MCF 10A (cell line): ENCODE measurements at regions of chr1 and their contacts with region 1.

Region 1: DNA sequence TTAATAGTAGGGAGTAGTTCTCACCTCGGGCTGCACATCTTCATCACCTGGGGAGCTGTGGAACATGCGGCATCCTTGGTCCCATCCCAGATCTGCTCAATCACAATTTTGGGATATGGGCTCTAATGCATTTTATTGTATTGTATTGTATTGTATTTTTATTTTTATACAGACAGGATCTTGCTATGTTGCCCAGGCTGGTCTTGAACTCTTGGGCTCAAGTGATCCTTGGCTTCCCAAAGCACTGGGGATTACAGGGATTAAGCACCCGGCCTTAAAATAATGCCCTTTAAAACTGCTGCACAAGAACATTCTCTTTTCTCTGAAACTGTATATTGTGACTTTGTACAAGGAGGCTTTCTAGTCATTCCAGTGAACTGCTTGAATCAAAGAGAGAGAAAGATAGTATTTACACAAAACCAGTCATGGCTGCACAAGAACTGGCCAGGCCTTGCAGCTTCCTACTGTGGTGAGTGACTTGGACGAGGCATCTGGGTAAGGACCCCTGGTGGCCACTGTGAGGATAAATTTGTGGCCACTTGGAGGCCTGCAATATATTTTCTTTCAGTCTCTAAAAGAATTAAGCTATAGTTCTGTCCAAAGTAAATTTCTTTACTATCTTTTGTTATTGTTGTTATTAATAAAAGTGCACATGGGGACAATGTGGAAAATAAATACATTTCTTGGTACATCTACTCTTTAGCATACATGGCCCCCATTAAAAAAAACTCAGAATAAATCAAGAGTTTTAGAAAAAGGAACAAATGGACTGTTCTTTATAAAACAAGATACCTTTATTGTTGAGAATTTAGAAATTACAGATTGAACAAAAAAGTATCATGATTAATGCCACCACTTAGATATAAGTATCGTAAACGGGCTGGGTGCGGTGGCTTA is 48.0 kb downstream of the TBCE start:
- DNase-seq: peak; percentile 88
- H3K4me3 Mint-ChIP-seq: no peak overlapping the region
- H3K27ac Mint-ChIP-seq: no peak overlapping the region
- H3K4me1 Mint-ChIP-seq: peaks cover 18% of the 10 kb centered on the region
- H3K27me3 Mint-ChIP-seq: no peaks in the 10 kb centered on the region
- CTCF ChIP-seq: peak; percentile 86

Region 2: GRCh38 chr1:235105051-235106043 is 309.9 kb before region 1 on chr1:
- CTCF ChIA-PET with region 1: interaction called, 13 read pairs
- POLR2A ChIA-PET with region 1: no interaction called
- intact Hi-C with region 1: loop called (anchors 1 kb)
- DNase-seq: peak; percentile 51
- H3K4me3 Mint-ChIP-seq: peak overlapping the region; percentile 59
- H3K27ac Mint-ChIP-seq: peak overlapping the region; percentile 33
- H3K4me1 Mint-ChIP-seq: peaks cover 29% of the 10 kb centered on the region
- H3K27me3 Mint-ChIP-seq: no peaks in the 10 kb centered on the region
- CTCF ChIP-seq: no peak

Region 3: GRCh38 chr1:235225299-235225698 is 190.0 kb before region 1 on chr1:
- CTCF ChIA-PET with region 1: interaction called, 20 read pairs
- POLR2A ChIA-PET with region 1: no interaction called
- intact Hi-C with region 1: no loop called
- DNase-seq: no peak
- H3K4me3 Mint-ChIP-seq: no peak overlapping the region
- H3K27ac Mint-ChIP-seq: no peak overlapping the region
- H3K4me1 Mint-ChIP-seq: peaks cover 3% of the 10 kb centered on the region
- H3K27me3 Mint-ChIP-seq: no peaks in the 10 kb centered on the region
- CTCF ChIP-seq: no peak

Region 4: DNA sequence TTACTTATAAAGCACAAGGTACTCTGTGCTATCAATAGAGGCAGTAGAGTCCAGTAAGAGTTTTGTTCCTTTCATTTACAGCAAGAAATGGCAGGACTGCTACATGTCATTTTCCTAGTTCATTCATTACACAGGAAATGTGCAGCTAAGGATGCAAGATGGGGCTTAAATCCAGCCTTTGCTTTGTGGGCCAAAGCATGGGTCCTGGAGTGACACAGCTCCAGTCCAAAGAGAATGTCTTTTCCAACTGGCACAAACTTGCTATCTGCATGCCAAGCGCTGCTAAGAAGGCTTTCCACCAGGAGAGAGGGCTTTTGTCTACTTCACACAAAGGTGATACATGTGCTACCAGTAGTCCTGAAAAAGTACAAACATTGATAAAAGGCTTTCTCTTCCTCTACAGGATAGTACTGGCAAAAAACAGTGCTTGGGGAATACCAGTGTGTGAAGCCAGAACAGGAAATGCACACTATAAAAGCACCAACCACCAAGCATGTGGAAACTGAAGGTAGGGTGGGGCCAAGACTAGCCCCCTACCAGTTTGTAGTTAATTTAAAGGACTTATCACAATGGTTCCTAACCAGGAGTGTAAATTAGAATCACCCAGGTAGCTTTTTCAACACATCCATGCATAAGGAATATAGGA is 156.0 kb before region 1 on chr1:
- CTCF ChIA-PET with region 1: interaction called, 73 read pairs
- POLR2A ChIA-PET with region 1: interaction called, 4 read pairs
- intact Hi-C with region 1: no loop called
- DNase-seq: no peak
- H3K4me3 Mint-ChIP-seq: no peak overlapping the region
- H3K27ac Mint-ChIP-seq: no peak overlapping the region
- H3K4me1 Mint-ChIP-seq: peaks cover 7% of the 10 kb centered on the region
- H3K27me3 Mint-ChIP-seq: no peaks in the 10 kb centered on the region
- CTCF ChIP-seq: no peak

Region 5: DNA sequence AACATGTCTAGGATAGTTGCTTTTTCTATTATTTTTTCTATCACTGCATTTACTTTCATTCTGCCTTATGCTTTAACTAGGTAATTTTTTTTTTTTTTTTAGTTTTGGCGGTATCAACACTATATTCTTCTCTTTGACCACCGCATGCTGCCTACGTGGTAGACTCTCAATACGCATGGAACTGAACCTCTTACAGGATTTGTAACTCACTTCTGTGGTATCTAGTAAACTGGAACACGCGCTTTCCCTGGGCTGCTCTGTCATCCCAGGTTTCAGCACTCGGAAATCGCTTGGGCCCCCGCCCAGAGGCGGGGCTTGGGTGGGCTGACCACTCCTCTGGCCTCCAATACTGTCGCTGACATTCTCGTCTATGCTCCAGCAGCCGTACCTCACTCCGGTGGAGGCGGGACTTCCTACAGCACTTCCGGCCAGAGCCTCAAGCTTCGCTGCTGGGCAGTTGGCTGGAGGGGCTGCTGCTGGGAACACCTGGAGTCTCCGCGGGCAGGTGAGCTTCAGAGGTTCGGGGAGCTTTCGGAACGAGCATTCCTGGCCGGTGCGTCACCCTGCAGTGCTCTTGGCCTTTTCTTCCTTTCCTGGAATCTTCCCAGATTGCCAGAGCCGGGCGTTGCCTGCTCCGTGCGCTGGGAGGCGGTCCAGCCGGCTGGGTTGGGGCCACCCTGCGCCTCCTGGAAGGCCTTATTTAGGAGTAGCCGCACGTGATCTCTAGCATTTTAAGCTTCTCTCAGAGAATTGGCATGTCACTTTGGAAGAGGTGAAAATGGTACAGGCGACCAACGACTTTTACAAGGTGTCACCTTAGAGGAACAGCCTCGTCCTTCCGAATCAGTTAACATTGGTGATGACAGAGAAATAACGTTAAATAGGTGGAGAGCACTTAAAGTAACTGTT is 48.0 kb before region 1 on chr1 and contains the start of gene TBCE:
- CTCF ChIA-PET with region 1: interaction called, 28 read pairs
- POLR2A ChIA-PET with region 1: interaction called, 29 read pairs
- intact Hi-C with region 1: loop called (anchors 1 kb)
- DNase-seq: peak; percentile 100
- H3K4me3 Mint-ChIP-seq: peak within 1 kb of the TSS; percentile 96
- H3K27ac Mint-ChIP-seq: peak within 1 kb of the TSS; percentile 94
- H3K4me1 Mint-ChIP-seq: peaks cover 26% of the 10 kb centered on the region
- H3K27me3 Mint-ChIP-seq: no peaks in the 10 kb centered on the region
- CTCF ChIP-seq: peak; percentile 16
- total RNA-seq, gene TBCE: 45.6 and 52.5 TPM in 2 replicates

Region 6: DNA sequence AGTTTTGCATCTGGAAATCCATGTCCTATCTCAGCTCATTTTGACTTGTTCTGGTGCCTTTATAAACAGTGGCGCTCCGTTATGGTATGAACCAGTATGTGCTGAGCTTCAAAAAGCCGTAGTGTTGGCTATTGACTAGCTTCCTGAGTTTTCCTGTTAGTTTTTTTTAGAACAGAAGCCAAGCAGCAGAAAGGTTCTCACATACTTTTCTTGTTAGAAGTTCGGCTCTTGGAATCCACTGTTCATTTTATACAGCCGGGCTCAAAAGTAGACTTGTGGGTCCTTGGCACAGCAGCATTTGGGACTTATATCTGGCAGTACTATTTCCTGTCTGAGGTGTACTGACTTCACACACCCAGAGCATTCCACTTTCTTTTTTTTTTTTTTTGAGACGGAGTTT is 15.7 kb after region 1 on chr1:
- CTCF ChIA-PET with region 1: interaction called, 58 read pairs
- POLR2A ChIA-PET with region 1: interaction called, 3 read pairs
- intact Hi-C with region 1: no loop called
- DNase-seq: no peak
- H3K4me3 Mint-ChIP-seq: no peak overlapping the region
- H3K27ac Mint-ChIP-seq: no peak overlapping the region
- H3K4me1 Mint-ChIP-seq: peaks cover 6% of the 10 kb centered on the region
- H3K27me3 Mint-ChIP-seq: no peaks in the 10 kb centered on the region
- CTCF ChIP-seq: no peak

Region 7: GRCh38 chr1:235617808-235618207 is 202.6 kb after region 1 on chr1:
- CTCF ChIA-PET with region 1: no interaction called
- POLR2A ChIA-PET with region 1: no interaction called
- intact Hi-C with region 1: no loop called
- DNase-seq: no peak
- H3K4me3 Mint-ChIP-seq: no peak overlapping the region
- H3K27ac Mint-ChIP-seq: no peak overlapping the region
- H3K4me1 Mint-ChIP-seq: peaks cover 6% of the 10 kb centered on the region
- H3K27me3 Mint-ChIP-seq: no peaks in the 10 kb centered on the region
- CTCF ChIP-seq: peak; percentile 31